K562 (cell line): ENCODE measurements at regions of chr2 and their contacts with region 1.

Region 1: DNA sequence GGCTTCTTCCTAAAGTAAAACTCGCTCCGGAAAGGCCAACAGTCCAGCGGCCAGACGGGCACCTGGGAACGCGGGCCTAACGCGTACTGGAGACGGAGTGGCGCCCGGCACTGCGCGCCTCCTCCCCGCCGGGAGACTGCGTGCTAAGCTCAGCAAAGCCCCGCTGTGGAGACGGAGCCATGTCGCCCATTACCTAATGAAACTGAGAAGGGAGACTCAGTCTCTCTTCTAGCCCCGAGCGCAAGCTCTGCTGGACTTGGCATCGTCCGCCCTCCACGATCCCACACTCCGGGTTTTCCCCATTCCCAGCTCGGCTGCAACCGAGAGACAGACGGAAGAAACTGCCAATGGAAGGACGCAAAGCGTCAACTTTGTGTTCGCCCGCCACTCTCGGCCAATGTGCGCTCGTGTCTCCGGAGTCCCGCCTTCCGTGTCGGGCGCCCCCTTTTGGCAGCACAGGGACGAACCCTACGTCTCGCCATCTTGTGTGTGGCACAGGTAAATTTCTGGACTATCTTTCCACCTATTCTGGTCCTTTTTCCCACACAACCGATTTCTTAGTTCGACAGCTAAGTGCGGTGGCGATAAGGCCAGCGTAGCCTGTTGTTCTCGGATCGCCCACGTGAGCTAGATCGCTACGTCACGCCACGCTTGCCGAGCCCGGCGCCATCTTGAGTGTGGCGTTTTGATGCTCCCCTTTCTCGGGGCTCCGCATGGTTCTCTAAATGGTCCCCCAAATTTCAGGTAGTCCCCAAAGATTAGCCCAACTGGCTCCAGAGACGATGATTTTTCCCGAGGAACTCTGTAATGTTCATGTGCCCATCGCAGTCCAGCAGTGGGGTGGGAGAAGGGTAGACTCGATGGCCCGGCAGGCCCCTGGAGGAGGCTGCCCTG is 1.3 kb upstream of the PTMA start:
- DNase-seq: peak; percentile 80 to 96 (median 87)
- ATAC-seq: peak; percentile 61
- H3K4me3 ChIP-seq: peak overlapping the region; percentile 60
- H3K27ac ChIP-seq: peak overlapping the region; percentile 97
- H3K4me1 ChIP-seq: peaks cover 13 to 52% of the 10 kb centered on the region in 2 experiments; a peak in 4 of 5 replicates
- H3K27me3 ChIP-seq: no peaks in the 10 kb centered on the region
- CTCF ChIP-seq: peak; percentile 57 to 80 (median 70)
- EP300 ChIP-seq: no peak
- POLR2A ChIP-seq: peak; percentile 70
- RAD21 ChIP-seq: no peak

Region 2: GRCh38 chr2:231514103-231514950 is 192.7 kb before region 1 on chr2:
- CTCF ChIA-PET with region 1: no interaction called
- POLR2A ChIA-PET with region 1: no interaction called
- in situ Hi-C with region 1: no loop called
- intact Hi-C with region 1: loop called (anchors 2 kb)
- DNase-seq: peak; percentile 97 to 99 (median 98)
- ATAC-seq: peak; percentile 99
- H3K4me3 ChIP-seq: peak overlapping the region; percentile 58
- H3K27ac ChIP-seq: peak overlapping the region; percentile 93
- H3K4me1 ChIP-seq: peaks cover 9 to 13% of the 10 kb centered on the region in 2 experiments; a peak in 4 of 5 replicates
- H3K27me3 ChIP-seq: no peaks in the 10 kb centered on the region; a peak in 1 of 5 replicates
- CTCF ChIP-seq: no peak
- EP300 ChIP-seq: no peak
- POLR2A ChIP-seq: peak; percentile 90
- RAD21 ChIP-seq: no peak

Region 3: DNA sequence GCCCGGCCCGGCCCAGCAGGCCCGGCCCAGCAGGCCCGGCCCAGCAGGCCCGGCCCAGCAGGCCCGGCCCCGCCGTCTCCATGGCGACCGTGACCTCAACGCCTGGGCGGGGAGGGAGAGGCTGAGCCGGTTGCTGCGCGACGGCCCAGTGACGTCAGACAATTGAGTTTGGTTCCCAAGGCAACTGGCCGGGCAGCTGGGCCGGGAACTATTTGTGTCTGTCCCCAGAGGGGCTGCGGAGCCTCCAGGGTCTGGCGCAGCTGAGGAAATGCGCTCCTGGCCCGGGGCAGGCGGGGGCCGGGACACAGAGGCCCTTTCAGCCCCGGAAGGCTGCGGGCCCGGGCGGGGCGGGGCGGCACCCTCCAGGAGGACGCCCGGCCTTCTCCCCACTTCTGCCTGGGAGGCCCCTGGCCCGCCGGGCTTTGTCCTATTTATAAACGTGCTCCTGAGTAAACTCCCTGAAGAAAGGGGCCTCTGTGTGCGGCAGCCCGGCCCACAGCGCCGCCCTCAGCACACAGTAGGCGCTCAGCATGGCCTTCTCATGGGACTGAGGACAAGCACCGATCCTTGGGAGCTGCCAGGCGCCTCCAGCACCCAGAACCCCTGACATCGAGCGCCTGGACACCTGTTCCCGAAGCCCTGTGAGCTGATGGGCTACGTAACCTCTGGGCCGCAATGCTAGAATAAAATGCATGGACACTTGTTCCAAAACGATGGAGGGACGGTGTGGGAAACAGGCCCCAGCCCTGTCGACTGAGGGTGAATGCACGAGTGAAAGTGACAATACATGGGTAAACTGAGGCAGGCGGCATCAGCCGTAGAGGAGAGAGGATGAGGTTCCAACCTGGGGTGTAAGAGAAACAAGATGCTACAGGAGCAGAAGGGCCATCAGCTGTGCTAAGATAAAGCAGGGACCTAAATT is 102.0 kb before region 1 on chr2:
- CTCF ChIA-PET with region 1: no interaction called
- POLR2A ChIA-PET with region 1: interaction called, 11 read pairs
- in situ Hi-C with region 1: loop called (anchors 5 kb)
- intact Hi-C with region 1: no loop called
- DNase-seq: peak; percentile 91 to 92 (median 92)
- ATAC-seq: peak; percentile 93
- H3K4me3 ChIP-seq: peak overlapping the region; percentile 30
- H3K27ac ChIP-seq: no peak overlapping the region
- H3K4me1 ChIP-seq: peaks cover 0 to 18% of the 10 kb centered on the region in 2 experiments; a peak in 3 of 5 replicates
- H3K27me3 ChIP-seq: no peaks in the 10 kb centered on the region
- CTCF ChIP-seq: no peak
- EP300 ChIP-seq: no peak
- POLR2A ChIP-seq: no peak
- RAD21 ChIP-seq: no peak

Region 4: GRCh38 chr2:231612179-231613053 is 94.6 kb before region 1 on chr2:
- CTCF ChIA-PET with region 1: interaction called, 12 read pairs
- POLR2A ChIA-PET with region 1: interaction called, 11 read pairs
- in situ Hi-C with region 1: loop called (anchors 5 kb)
- intact Hi-C with region 1: no loop called
- DNase-seq: peak; percentile 87 to 92 (median 88)
- ATAC-seq: peak; percentile 94
- H3K4me3 ChIP-seq: no peak overlapping the region
- H3K27ac ChIP-seq: peak overlapping the region; percentile 46; the same call in 1 of the 3 replicates
- H3K4me1 ChIP-seq: peaks cover 17 to 36% of the 10 kb centered on the region in 2 experiments; a peak in 4 of 5 replicates
- H3K27me3 ChIP-seq: peaks cover 0 to 4% of the 10 kb centered on the region in 2 experiments; a peak in 1 of 5 replicates
- CTCF ChIP-seq: peak; percentile 77 to 86 (median 82)
- EP300 ChIP-seq: no peak
- POLR2A ChIP-seq: no peak
- RAD21 ChIP-seq: peak; percentile 82 to 83

Region 5: DNA sequence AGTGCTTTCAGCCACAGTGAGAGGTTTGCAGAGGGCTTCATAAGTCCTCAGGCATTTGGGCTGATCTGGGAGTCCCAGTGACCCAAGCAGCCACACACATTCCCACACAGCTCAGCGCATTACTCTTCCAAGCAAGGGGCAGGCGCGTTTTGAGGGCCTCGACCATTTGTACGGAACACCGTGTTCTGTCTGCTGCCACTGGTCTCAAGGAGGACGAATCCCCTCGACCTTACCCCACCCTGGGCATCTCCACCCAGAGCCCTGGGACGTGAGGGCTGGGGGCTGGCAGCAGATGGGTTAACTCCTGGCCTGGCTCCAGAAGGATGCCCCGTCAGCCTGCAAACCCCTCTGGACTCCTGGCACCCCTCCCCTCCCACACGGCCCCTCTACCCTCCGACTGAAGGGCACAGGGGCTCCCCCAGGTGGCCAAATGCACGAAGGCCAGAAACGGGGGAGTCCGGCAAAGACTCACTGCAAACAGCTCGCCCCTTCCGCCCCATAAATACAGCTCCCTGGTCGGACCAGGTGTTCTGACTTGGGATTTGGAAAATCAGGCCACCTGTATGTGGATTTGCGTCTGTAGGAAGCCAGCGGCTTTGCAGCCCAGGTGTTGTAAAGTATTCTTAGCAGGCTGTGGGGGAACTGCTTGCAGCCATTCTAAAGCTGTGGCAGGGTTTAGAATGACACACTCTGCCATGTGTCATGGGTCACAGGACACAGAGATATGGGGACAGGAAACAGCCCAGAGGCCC is 32.2 kb before region 1 on chr2:
- CTCF ChIA-PET with region 1: interaction called, 7 read pairs
- POLR2A ChIA-PET with region 1: interaction called, 5 read pairs
- in situ Hi-C with region 1: loop called (anchors 5 kb)
- intact Hi-C with region 1: no loop called
- DNase-seq: peak; percentile 56 to 69 (median 62)
- ATAC-seq: peak; percentile 75
- H3K4me3 ChIP-seq: no peak overlapping the region
- H3K27ac ChIP-seq: peak overlapping the region; percentile 48; the same call in 1 of the 3 replicates
- H3K4me1 ChIP-seq: peaks cover 19 to 43% of the 10 kb centered on the region in 2 experiments
- H3K27me3 ChIP-seq: no peaks in the 10 kb centered on the region
- CTCF ChIP-seq: peak; percentile 70 to 80 (median 76)
- EP300 ChIP-seq: no peak
- POLR2A ChIP-seq: no peak
- RAD21 ChIP-seq: peak; percentile 70 to 75

Region 6: DNA sequence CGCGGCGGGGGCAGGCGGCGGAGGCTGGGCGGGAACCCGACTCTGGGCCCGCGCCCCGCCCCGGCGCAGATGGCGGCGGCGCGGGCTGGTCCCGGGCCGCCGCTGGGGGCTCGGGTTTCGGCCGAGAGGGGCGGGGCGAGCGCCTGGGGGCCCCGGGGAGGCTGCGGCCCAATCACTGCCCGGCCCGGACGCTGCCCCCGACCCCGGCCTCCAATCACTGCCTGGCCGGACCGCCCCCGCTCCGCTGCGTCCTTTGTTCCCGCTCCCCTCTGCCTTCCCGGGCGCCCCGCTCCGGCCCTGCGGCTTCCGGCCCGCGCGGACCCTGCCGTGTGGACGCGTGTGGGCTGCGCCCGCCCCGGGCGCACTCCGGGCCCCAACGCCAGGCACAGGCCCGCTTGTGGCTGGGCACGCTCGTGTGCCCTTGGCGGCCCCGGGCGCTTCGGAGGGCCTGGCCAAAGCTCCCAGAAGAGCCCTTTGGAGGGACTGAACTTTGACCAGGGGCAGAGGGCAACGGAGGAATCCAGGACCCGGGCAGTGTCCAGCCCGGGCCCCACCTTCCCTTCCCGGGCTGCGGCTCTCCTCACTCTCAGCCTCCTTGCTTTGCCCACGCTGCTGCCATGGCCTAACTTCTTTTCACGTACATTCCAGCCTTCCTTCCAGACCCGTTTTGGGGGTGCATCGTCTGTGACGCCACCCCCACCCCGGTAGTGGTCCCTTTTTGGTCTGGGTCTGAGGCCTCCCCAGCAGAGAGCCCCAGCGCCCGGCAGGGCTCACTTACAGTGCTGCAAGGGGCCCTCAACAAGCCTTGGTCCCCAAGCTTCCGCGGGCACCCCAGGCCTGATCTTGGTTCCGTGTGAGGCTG is 25.8 kb before region 1 on chr2:
- CTCF ChIA-PET with region 1: interaction called, 7 read pairs
- POLR2A ChIA-PET with region 1: interaction called, 90 read pairs
- in situ Hi-C with region 1: loop called (anchors 5 kb)
- intact Hi-C with region 1: no loop called
- DNase-seq: peak in 3 of 4 experiments; percentile 62 to 92 (median 91)
- ATAC-seq: peak; percentile 71
- H3K4me3 ChIP-seq: peak overlapping the region; percentile 22
- H3K27ac ChIP-seq: no peak overlapping the region
- H3K4me1 ChIP-seq: peaks cover 0 to 24% of the 10 kb centered on the region in 2 experiments; a peak in 3 of 5 replicates
- H3K27me3 ChIP-seq: peaks cover 3 to 6% of the 10 kb centered on the region in 2 experiments; a peak in 3 of 5 replicates
- CTCF ChIP-seq: no peak
- EP300 ChIP-seq: no peak
- POLR2A ChIP-seq: no peak
- RAD21 ChIP-seq: no peak

Region 7: DNA sequence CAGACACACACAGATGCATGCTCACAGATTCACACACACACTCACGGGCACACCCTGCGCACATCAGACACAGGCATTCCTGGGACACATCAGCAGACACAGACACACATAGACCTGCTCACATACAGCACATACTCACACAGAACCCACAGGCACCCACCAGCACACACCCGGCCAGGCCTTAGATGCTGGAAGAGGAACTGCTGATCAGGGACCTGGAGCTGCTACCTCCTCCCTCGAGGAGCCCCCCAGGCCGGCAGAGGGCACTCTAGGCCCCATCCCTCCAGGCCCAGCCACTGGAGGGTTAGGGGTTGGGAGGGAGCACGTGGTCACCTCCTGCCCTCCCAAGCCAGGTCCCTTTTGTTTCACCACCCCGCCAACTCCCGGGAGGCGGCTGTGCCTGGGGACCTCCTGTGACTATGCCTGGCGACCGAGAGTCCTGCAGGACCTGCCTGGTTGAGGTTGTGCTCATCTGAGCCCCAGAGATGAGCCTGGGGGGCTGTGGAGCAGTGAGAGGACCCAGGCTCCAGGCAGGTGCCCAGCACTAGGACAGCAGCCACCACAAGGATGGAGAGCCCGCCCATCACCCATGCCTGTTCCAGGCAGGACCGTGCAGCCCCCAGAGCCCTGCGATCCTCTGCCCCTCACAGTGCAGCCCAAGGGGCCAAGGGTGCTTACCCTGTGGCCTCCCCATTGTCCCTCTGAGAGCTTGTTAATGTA is 19.7 kb before region 1 on chr2:
- CTCF ChIA-PET with region 1: no interaction called
- POLR2A ChIA-PET with region 1: interaction called, 90 read pairs
- in situ Hi-C with region 1: no loop called
- intact Hi-C with region 1: loop called (anchors 1 kb)
- DNase-seq: peak; percentile 82 to 84 (median 83)
- ATAC-seq: peak; percentile 98
- H3K4me3 ChIP-seq: no peak overlapping the region
- H3K27ac ChIP-seq: 0 out of 3 replicates have a peak overlapping the region, but pooled peaks have one; percentile 45
- H3K4me1 ChIP-seq: peaks cover 2 to 18% of the 10 kb centered on the region in 2 experiments; a peak in 2 of 5 replicates
- H3K27me3 ChIP-seq: no peaks in the 10 kb centered on the region
- CTCF ChIP-seq: peak; percentile 75 to 77 (median 76)
- EP300 ChIP-seq: no peak
- POLR2A ChIP-seq: 0 out of 2 replicates have a peak, but pooled peaks have one; percentile 42
- RAD21 ChIP-seq: peak; percentile 48 to 62

Region 8: GRCh38 chr2:231786177-231786916 is 79.4 kb after region 1 on chr2 and contains the start of gene COPS7B:
- CTCF ChIA-PET with region 1: no interaction called
- POLR2A ChIA-PET with region 1: no interaction called
- in situ Hi-C with region 1: no loop called
- intact Hi-C with region 1: no loop called
- DNase-seq: peak; percentile 60 to 85 (median 72)
- ATAC-seq: peak; percentile 88
- H3K4me3 ChIP-seq: peak within 1 kb of the TSS; percentile 99
- H3K27ac ChIP-seq: peak within 1 kb of the TSS; percentile 76
- H3K4me1 ChIP-seq: peaks cover 9 to 13% of the 10 kb centered on the region in 2 experiments; a peak in 3 of 5 replicates
- H3K27me3 ChIP-seq: no peaks in the 10 kb centered on the region
- CTCF ChIP-seq: peak; percentile 55 to 71 (median 65)
- EP300 ChIP-seq: no peak; the same call in 1 of the 2 replicates
- POLR2A ChIP-seq: peak; percentile 67; the same call in 1 of the 2 replicates
- RAD21 ChIP-seq: peak in 1 of 2 experiments; percentile 30; a peak in 1 of 4 replicates
- polyA plus RNA-seq, gene COPS7B: 6.0 to 8.3 TPM